ENCODE measurements at regions of chr1 and their contacts with region 1.

Region 1: GRCh38 chr1:27300341-27301051 is 21.5 kb upstream of the TMEM222 start:
- DNase-seq: peak; percentile 78 to 84
- ATAC-seq: peak; percentile 79 to 93 (median 88)
- H3K4me3 ChIP-seq: no peak overlapping the region
- H3K27ac ChIP-seq: peak overlapping the region; percentile 65 to 88 (median 82)
- H3K4me1 ChIP-seq: peaks cover 11 to 47% (median 30%) of the 10 kb centered on the region in 9 donors
- H3K27me3 ChIP-seq: no peaks in the 10 kb centered on the region
- CTCF ChIP-seq: peak; percentile 95 to 99 (median 99)

Region 2: GRCh38 chr1:27383039-27383605 is 82.6 kb after region 1 on chr1 and contains the start of gene CD164L2:
- intact Hi-C with region 1: loop called in 5 of 10 experiments (anchors 1 to 5 kb)
- DNase-seq: no peak
- ATAC-seq: peak in 2 of 8 donors; percentile 7 to 30
- H3K4me3 ChIP-seq: no peak within 1 kb of the TSS
- H3K27ac ChIP-seq: no peak within 1 kb of the TSS
- H3K4me1 ChIP-seq: peaks cover 0 to 18% (median 6%) of the 10 kb centered on the region in 9 donors
- H3K27me3 ChIP-seq: peaks cover 0 to 9% (median 0%) of the 10 kb centered on the region in 7 donors
- CTCF ChIP-seq: no peak
- total RNA-seq, gene CD164L2: not detected

Region 3: GRCh38 chr1:27616441-27616840 is 315.9 kb after region 1 on chr1:
- intact Hi-C with region 1: loop called in 1 of 10 experiments (anchors 10 kb)
- DNase-seq: no peak
- ATAC-seq: no peak
- H3K4me3 ChIP-seq: no peak overlapping the region
- H3K27ac ChIP-seq: peak overlapping the region in 1 of 10 donors; percentile 31
- H3K4me1 ChIP-seq: peaks cover 0 to 54% (median 7%) of the 10 kb centered on the region in 9 donors
- H3K27me3 ChIP-seq: no peaks in the 10 kb centered on the region
- CTCF ChIP-seq: peak in 3 of 9 donors; percentile 3 to 14 (median 13)

Region 4: GRCh38 chr1:27671964-27672749 is 371.7 kb after region 1 on chr1 and contains the start of gene IFI6:
- intact Hi-C with region 1: loop called in 3 of 10 experiments (anchors 5 to 10 kb)
- DNase-seq: peak; percentile 79 to 92
- ATAC-seq: peak; percentile 96 to 98 (median 98)
- H3K4me3 ChIP-seq: peak within 1 kb of the TSS; percentile 49 to 88 (median 62)
- H3K27ac ChIP-seq: peak within 1 kb of the TSS; percentile 42 to 93 (median 84)
- H3K4me1 ChIP-seq: peaks cover 4 to 52% (median 35%) of the 10 kb centered on the region in 9 donors
- H3K27me3 ChIP-seq: no peaks in the 10 kb centered on the region
- CTCF ChIP-seq: peak; percentile 9 to 62 (median 47)
- total RNA-seq, gene IFI6: 24.2 to 143 (median 43.7) TPM

Measured in heart right ventricle (tissue), 16 donors.